Activated T-helper 2 cell treated with anti-CD3 and anti-CD28 coated beads, Interferon-gamma antibody, Interleukin-2, Interleukin-4, amounts not matched to agents 10 μg/mL and 5 μg/mL and 100 μg/mL, durations not matched to agents 14 hours and 24 hours and 36 hours (primary cell): ENCODE measurements at regions of chr6 and their contacts with region 1.

Region 1: GRCh38 chr6:125749173-125749864 is at the start of gene HEY2:
- DNase-seq: peak; percentile 81
- H3K4me3 Mint-ChIP-seq: peak within 1 kb of the TSS; percentile 84
- H3K27ac Mint-ChIP-seq: no peak within 1 kb of the TSS
- H3K4me1 Mint-ChIP-seq: peaks cover 29% of the 10 kb centered on the region
- H3K27me3 Mint-ChIP-seq: peaks cover 79% of the 10 kb centered on the region
- total RNA-seq, gene HEY2: not detected in 2 replicates

Region 2: DNA sequence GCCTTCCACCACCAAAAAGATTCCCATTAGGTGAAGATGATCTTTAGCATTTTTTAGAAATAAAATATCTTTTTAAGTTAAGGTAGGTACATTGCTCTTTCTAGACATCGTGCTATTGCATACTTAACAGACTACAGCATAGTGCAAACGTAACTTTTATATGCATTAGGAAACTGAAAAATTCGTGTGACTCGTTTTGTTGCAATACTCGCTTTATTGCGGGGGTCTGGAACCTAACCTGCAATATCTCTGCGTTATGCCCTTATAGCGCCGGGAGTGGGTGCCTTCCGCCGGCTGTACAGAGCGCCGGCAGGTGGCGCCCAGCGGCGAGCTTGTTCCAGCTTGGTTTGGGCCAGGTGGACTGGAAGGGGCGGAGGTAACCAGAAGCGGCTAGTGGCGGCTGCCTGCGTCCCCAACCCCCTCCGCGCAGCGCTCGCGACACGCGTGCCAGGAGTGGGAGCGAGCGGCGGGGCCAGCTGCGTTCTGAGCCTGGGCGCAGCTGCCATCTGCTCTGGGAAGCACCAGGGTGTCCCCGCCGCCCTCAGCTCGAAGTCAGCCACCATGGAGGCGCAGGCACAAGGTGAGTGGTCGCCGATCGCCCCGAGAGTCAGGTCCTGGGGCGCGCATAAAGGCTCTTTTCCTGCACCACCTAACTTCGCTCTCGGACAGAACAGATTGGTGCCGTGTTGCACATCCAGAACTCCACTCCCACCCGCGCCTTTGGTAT is 595.8 kb before region 1 on chr6 and contains the start of gene TPD52L1:
- intact Hi-C with region 1: loop called (anchors 5 kb)
- DNase-seq: peak; percentile 37
- H3K4me3 Mint-ChIP-seq: peak within 1 kb of the TSS; percentile 52
- H3K27ac Mint-ChIP-seq: no peak within 1 kb of the TSS
- H3K4me1 Mint-ChIP-seq: peaks cover 3% of the 10 kb centered on the region
- H3K27me3 Mint-ChIP-seq: peaks cover 49% of the 10 kb centered on the region
- total RNA-seq, gene TPD52L1: not detected in 2 replicates

Region 3: DNA sequence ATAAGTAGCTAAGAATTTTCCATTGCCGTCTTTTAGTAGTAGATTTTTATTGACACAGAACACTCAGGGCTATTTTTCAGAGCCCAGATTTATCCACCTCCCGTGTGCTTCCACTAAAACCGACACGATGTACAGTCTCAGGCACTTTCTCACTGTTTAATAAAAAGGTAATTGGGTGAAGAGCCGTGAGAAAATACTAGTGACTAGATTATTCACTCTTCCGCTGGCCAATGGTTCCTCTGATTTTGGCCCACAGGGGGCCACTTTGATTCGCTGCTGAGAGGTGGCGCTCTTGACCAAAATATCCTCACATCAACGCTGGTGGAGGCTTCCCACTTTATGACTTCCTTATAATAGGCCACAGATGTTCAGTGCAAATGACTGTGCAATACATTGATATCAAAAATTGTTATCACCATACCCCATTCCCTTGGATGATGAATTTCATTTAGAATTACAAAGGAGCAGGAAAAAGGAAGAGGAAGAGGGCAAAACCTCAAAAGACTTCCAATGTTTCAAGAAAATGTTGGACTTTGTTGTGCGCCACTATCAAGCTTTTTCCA is 435.2 kb before region 1 on chr6:
- intact Hi-C with region 1: loop called (anchors 1 kb)
- DNase-seq: no peak
- H3K4me3 Mint-ChIP-seq: no peak overlapping the region
- H3K27ac Mint-ChIP-seq: no peak overlapping the region
- H3K4me1 Mint-ChIP-seq: no peaks in the 10 kb centered on the region
- H3K27me3 Mint-ChIP-seq: peaks cover 21% of the 10 kb centered on the region

Region 4: GRCh38 chr6:125512621-125513020 is 236.7 kb before region 1 on chr6:
- intact Hi-C with region 1: loop called (anchors 10 kb)
- DNase-seq: no peak
- H3K4me3 Mint-ChIP-seq: no peak overlapping the region
- H3K27ac Mint-ChIP-seq: no peak overlapping the region
- H3K4me1 Mint-ChIP-seq: no peaks in the 10 kb centered on the region
- H3K27me3 Mint-ChIP-seq: no peaks in the 10 kb centered on the region

Region 5: DNA sequence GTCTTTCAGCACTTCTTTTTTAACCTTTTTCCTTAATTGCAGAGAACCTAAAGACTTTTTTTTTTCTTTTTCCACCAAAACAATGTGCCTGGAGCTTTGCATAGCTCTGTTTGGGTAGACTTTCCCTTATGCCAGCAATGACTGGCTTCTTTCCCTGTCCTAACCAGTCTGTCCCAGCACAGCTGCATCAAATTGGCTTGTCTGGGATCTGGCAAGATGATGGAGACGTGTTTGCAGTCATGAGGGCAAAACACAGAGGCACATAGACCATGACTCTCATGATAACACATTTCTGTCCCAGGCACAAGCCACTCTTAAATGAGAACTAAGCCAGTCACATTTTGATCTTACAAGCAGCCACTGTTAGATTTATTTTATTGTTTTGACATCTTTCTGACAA is 16.6 kb after region 1 on chr6:
- intact Hi-C with region 1: loop called (anchors 2 kb)
- DNase-seq: no peak
- H3K4me3 Mint-ChIP-seq: no peak overlapping the region
- H3K27ac Mint-ChIP-seq: no peak overlapping the region
- H3K4me1 Mint-ChIP-seq: peaks cover 4% of the 10 kb centered on the region
- H3K27me3 Mint-ChIP-seq: peaks cover 50% of the 10 kb centered on the region

Region 6: DNA sequence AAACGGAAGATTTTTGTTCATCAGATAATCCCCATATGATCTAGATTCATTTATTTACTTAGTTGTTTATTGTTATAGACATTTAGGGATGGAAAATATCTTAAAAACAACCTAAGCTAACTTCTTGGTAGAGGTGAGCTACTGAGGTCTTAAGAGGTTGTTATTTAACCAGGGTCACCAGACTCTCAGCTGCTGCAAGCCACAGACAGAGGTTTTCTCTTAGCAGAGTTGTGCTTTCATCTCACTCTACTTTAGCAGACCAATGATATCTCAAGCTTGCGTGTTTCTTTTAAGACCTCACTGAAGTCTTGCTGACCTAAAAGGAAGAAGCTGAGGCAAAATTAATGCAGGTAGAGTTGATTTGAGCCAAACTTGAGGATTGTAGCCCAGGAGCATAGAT is 85.0 kb after region 1 on chr6:
- intact Hi-C with region 1: no loop called
- DNase-seq: no peak
- H3K4me3 Mint-ChIP-seq: no peak overlapping the region
- H3K27ac Mint-ChIP-seq: no peak overlapping the region
- H3K4me1 Mint-ChIP-seq: peaks cover 55% of the 10 kb centered on the region
- H3K27me3 Mint-ChIP-seq: no peaks in the 10 kb centered on the region

Region 7: DNA sequence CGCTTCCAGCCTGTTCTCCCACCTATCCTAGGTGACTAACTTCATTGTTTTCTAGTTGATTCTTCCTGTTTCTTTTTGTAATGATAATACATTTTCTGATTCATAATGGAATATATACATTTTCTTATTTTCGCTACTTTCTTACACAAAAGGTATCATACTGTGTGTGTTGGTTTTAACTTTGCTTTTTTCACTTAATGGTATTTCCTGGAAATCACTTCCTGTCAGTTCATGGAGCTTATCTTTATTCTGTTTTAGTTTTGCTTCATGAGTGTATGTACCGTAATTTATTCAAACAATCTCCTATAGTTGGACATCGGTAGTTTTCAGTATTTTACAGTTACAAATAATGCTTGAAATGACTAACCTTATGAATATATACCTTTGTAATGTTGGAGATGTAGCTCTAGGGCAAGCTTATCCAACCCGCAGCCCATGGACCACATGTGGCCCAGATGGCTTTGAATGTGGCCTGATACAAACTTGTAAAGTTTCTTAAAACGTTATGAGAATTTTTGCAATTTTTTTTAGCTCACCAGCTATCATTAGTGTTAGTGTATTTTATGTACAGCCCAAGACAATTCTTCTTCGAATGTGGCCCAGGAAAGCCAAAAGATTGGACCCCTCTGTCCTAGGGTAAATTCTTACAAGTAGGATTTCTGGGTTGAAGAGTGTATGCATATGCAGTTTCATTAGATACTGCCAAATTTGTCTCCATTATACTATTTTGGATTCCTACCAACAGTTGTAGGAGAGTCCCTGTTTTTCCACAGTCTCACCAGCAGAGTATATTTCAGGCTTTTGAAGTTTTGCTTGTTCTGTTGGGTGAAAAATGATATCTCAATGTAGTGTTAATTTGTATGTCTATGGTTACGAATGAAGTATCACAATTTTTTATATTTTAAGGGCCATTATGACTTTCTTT is 253.7 kb after region 1 on chr6:
- intact Hi-C with region 1: no loop called
- DNase-seq: no peak
- H3K4me3 Mint-ChIP-seq: no peak overlapping the region
- H3K27ac Mint-ChIP-seq: no peak overlapping the region
- H3K4me1 Mint-ChIP-seq: peaks cover 15% of the 10 kb centered on the region
- H3K27me3 Mint-ChIP-seq: no peaks in the 10 kb centered on the region